ENCODE measurements at regions of chr11 and their contacts with region 1.

Region 1: GRCh38 chr11:57144075-57144474 is 37.7 kb upstream of the LRRC55 start:
- DNase-seq: no peak
- ATAC-seq: no peak
- H3K4me3 ChIP-seq: no peak overlapping the region
- H3K27ac ChIP-seq: no peak overlapping the region
- H3K4me1 ChIP-seq: no peaks in the 10 kb centered on the region
- H3K27me3 ChIP-seq: no peaks in the 10 kb centered on the region
- CTCF ChIP-seq: no peak
- POLR2A ChIP-seq: no peak

Region 2: DNA sequence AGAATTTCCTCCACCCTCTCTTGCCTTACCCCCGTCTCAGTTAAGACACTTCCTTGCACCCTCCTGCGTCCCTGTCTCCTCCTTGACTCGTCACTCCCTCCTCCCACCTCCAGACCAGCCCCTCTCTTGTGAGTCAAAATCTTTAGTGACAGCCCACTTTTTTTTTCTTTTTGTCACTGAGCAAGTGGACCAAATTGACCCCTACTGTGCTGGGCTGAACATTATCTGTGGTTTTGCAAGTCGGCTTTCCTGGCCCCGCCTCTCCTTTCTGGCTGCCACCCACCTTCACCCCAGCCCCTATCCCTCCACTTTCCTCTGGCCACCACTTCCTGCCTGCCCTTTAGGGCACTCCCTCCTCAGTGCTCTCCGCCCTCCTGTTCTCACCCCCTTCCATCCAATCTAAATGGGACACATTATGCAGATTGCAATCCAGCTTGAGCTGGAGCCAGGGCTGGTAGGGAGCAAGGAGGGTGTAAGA is 93.2 kb after region 1 on chr11 and contains the start of gene APLNR:
- intact Hi-C with region 1: loop called (anchors 10 kb)
- DNase-seq: no peak
- ATAC-seq: no peak
- H3K4me3 ChIP-seq: no peak within 1 kb of the TSS
- H3K27ac ChIP-seq: no peak within 1 kb of the TSS
- H3K4me1 ChIP-seq: no peaks in the 10 kb centered on the region
- H3K27me3 ChIP-seq: no peaks in the 10 kb centered on the region
- CTCF ChIP-seq: no peak
- POLR2A ChIP-seq: no peak
- total RNA-seq, gene APLNR: 0.66 to 1.3 TPM